Heart left ventricle (tissue), 16 donors: ENCODE measurements at regions of chr2 and their contacts with region 1.

Region 1: DNA sequence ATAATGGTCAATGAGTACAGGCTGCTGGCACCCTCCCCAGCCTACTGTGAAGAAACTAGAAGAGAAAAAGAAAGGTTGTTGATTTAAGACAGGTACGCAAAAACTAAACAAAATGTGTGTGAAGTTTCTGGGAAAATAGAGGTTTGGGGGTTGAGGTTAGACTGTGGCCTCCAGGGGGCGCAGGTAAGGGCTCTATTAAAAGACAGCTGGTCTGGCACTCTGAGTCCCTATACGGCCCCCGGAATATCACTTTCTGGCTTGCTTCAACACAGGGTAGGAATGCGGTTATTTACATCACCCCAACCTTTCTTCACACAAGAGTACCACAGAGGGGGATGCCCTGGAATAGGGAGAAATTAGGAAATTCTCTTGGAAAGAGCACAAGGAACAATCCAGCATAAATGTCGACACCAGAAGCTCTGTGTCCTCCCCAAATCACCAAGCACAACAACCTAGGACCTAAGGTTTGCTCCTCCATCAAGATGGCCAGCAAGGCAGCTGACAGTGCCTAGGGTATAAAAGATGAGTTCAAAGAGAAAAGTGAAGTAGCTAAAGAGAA is 480.8 kb upstream of the KLHL29 start:
- DNase-seq: peak in 2 of 5 donors; percentile 9 to 32
- ATAC-seq: peak in 1 of 4 donors; percentile 54
- H3K4me3 ChIP-seq: no peak overlapping the region
- H3K27ac ChIP-seq: no peak overlapping the region
- H3K4me1 ChIP-seq: no peaks in the 10 kb centered on the region
- H3K27me3 ChIP-seq: peaks cover 0 to 3% (median 0%) of the 10 kb centered on the region in 9 donors
- CTCF ChIP-seq: peak; percentile 19 to 62 (median 44)
- POLR2A ChIP-seq: no peak

Region 2: DNA sequence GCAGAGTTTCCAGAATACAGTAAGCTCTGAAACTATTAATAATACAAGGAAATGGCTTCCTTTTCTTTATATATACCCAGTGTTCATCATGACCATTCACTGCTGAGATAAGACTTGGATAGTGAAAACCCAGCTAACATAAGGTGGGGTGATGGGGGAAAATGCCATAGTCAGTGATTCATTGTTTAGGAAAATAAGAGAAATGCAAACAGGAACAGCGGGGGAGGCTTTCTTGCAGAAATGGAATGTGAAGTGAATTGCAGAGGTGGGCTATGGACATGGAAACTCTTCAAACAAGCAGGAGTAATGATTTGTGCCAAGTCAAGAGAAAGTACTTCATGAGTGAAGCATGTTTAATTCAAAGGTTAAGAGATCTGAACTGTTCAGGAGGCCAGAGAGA is 1261.0 kb before region 1 on chr2:
- intact Hi-C with region 1: no loop called
- DNase-seq: no peak
- ATAC-seq: no peak
- H3K4me3 ChIP-seq: no peak overlapping the region
- H3K27ac ChIP-seq: no peak overlapping the region
- H3K4me1 ChIP-seq: no peaks in the 10 kb centered on the region
- H3K27me3 ChIP-seq: no peaks in the 10 kb centered on the region
- CTCF ChIP-seq: no peak
- POLR2A ChIP-seq: no peak

Region 3: GRCh38 chr2:23260621-23261020 is 356.4 kb after region 1 on chr2:
- intact Hi-C with region 1: no loop called
- DNase-seq: no peak
- ATAC-seq: no peak
- H3K4me3 ChIP-seq: no peak overlapping the region
- H3K27ac ChIP-seq: no peak overlapping the region
- H3K4me1 ChIP-seq: no peaks in the 10 kb centered on the region
- H3K27me3 ChIP-seq: no peaks in the 10 kb centered on the region
- CTCF ChIP-seq: no peak
- POLR2A ChIP-seq: no peak

Region 4: GRCh38 chr2:23273786-23274185 is 369.6 kb after region 1 on chr2:
- intact Hi-C with region 1: loop called in 1 of 10 experiments (anchors 10 kb)
- DNase-seq: no peak
- ATAC-seq: no peak
- H3K4me3 ChIP-seq: no peak overlapping the region
- H3K27ac ChIP-seq: no peak overlapping the region
- H3K4me1 ChIP-seq: peaks cover 0 to 4% (median 0%) of the 10 kb centered on the region in 12 donors
- H3K27me3 ChIP-seq: peaks cover 0 to 13% (median 0%) of the 10 kb centered on the region in 9 donors
- CTCF ChIP-seq: no peak
- POLR2A ChIP-seq: no peak

Region 5: DNA sequence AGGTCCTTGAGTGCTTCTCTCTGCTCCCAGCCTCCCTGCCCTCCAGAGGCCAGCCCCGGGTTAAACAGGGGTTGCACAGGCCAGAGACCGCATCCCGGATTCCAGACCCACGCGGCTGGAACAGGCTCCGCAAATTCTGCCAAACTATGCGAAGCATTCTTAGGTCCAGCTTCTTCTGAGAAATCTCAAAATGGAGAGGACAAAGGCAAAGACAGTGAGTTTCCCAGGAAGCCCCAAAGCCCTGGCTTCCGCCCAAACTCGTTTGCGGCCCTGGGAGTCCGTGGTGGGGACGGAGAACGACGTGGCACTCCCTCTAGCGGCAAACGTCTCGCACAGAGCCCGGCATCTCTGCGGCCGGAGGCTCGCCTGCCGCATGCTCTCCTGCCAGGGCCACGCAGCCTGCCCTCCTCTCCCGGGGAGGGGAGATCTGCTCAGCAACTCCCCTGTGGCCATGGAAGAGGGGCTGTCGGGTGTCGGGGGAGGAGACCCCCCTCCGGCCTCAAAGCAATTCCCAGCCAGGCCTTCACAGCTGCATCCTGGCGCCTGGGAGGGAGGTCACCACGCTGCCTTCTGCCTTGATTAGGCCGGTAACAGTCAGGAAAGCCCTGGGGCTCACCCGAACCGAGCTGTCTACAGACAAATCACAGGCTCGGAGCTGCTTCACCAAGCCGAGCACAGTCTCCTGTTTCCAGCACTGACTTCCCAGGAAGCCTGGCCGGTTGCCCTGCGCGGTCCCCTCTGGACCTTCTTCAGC is 447.4 kb after region 1 on chr2:
- intact Hi-C with region 1: loop called in 4 of 10 experiments (anchors 5 to 10 kb)
- DNase-seq: peak; percentile 85 to 92 (median 88)
- ATAC-seq: peak; percentile 91 to 97 (median 94)
- H3K4me3 ChIP-seq: peak overlapping the region in 6 of 12 donors; percentile 8 to 44 (median 18)
- H3K27ac ChIP-seq: peak overlapping the region in 11 of 12 donors; percentile 7 to 67 (median 42)
- H3K4me1 ChIP-seq: peaks cover 0 to 19% (median 7%) of the 10 kb centered on the region in 12 donors
- H3K27me3 ChIP-seq: peaks cover 0 to 25% (median 0%) of the 10 kb centered on the region in 9 donors
- CTCF ChIP-seq: peak; percentile 77 to 94 (median 84)
- POLR2A ChIP-seq: no peak